ENCODE measurements at regions of chr1 and their contacts with region 1.

Region 1: GRCh38 chr1:174815036-174815435 is 184.7 kb upstream of the CACYBP start:
- DNase-seq: peak; percentile 60
- H3K4me3 Mint-ChIP-seq: no peak overlapping the region
- H3K27ac Mint-ChIP-seq: no peak overlapping the region
- H3K4me1 Mint-ChIP-seq: peaks cover 33% of the 10 kb centered on the region
- H3K27me3 Mint-ChIP-seq: no peaks in the 10 kb centered on the region

Region 2: DNA sequence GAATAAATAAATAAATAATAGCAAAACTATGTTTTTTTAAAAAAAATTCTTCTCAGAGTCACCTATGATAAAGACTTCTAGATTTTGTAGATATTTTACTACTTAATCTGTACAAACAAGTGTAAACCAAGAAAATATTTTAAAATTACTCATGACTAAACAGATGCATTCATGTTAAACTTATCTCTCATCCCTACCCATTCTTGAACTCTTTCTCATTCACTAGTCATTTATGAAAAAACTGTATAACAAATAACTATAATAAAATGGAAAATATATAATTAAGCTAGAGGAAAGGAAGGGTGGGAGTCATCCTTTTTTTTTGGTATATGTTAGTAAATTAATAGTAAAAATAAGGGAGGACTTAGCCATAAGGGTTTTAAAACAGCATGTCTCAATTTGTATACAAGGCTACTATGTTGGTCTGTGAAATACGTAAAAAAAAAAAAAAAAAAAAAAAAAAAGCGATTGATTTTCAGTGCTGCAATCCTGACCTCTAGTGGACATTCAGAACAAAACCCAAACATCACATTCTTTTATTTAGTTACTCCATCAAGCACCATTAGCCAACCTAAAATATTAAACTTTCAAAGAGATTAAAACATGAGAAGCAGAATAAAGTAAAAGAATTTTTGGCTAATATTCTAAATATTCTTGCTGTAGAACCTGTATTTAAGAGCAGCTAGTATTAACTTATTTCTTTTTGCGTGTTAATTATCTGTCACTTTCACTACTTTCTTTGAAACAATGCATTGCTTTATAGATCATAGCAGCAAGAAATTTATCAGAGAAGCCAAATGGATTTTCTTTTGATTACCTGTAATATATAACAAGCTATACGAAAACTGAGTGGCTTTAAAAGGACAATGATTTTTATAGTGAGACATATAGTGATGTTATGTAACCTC is 71.1 kb before region 1 on chr1:
- CTCF ChIA-PET with region 1: no interaction called
- POLR2A ChIA-PET with region 1: no interaction called
- intact Hi-C with region 1: no loop called
- DNase-seq: no peak
- H3K4me3 Mint-ChIP-seq: no peak overlapping the region
- H3K27ac Mint-ChIP-seq: no peak overlapping the region
- H3K4me1 Mint-ChIP-seq: peaks cover 4% of the 10 kb centered on the region
- H3K27me3 Mint-ChIP-seq: no peaks in the 10 kb centered on the region

Region 3: GRCh38 chr1:174791863-174792262 is 23.2 kb before region 1 on chr1:
- CTCF ChIA-PET with region 1: no interaction called
- POLR2A ChIA-PET with region 1: no interaction called
- intact Hi-C with region 1: no loop called
- DNase-seq: no peak
- H3K4me3 Mint-ChIP-seq: no peak overlapping the region
- H3K27ac Mint-ChIP-seq: no peak overlapping the region
- H3K4me1 Mint-ChIP-seq: peaks cover 4% of the 10 kb centered on the region
- H3K27me3 Mint-ChIP-seq: no peaks in the 10 kb centered on the region

Region 4: GRCh38 chr1:174828264-174828663 is 13.2 kb after region 1 on chr1:
- CTCF ChIA-PET with region 1: no interaction called
- POLR2A ChIA-PET with region 1: no interaction called
- intact Hi-C with region 1: no loop called
- DNase-seq: no peak
- H3K4me3 Mint-ChIP-seq: no peak overlapping the region
- H3K27ac Mint-ChIP-seq: no peak overlapping the region
- H3K4me1 Mint-ChIP-seq: no peaks in the 10 kb centered on the region
- H3K27me3 Mint-ChIP-seq: no peaks in the 10 kb centered on the region

Region 5: GRCh38 chr1:174841747-174842146 is 26.7 kb after region 1 on chr1:
- CTCF ChIA-PET with region 1: interaction called, 3 read pairs
- POLR2A ChIA-PET with region 1: no interaction called
- intact Hi-C with region 1: loop called (anchors 2 kb)
- DNase-seq: no peak
- H3K4me3 Mint-ChIP-seq: no peak overlapping the region
- H3K27ac Mint-ChIP-seq: no peak overlapping the region
- H3K4me1 Mint-ChIP-seq: peaks cover 10% of the 10 kb centered on the region
- H3K27me3 Mint-ChIP-seq: no peaks in the 10 kb centered on the region

Measured in activated CD4-positive, alpha-beta memory T cell treated with anti-CD3 and anti-CD28 coated beads for 36 hours (primary cell).